ENCODE measurements at regions of chr12 and their contacts with region 1.

Region 1: GRCh38 chr12:45728630-45729232 is 775 bp upstream of the ARID2 start:
- DNase-seq: peak; percentile 81 to 96
- H3K4me3 ChIP-seq: peak overlapping the region; percentile 98
- H3K27ac ChIP-seq: peak overlapping the region; percentile 91
- H3K4me1 ChIP-seq: peaks cover 42% of the 10 kb centered on the region
- H3K27me3 ChIP-seq: no peaks in the 10 kb centered on the region
- CTCF ChIP-seq: peak; percentile 83

Region 2: DNA sequence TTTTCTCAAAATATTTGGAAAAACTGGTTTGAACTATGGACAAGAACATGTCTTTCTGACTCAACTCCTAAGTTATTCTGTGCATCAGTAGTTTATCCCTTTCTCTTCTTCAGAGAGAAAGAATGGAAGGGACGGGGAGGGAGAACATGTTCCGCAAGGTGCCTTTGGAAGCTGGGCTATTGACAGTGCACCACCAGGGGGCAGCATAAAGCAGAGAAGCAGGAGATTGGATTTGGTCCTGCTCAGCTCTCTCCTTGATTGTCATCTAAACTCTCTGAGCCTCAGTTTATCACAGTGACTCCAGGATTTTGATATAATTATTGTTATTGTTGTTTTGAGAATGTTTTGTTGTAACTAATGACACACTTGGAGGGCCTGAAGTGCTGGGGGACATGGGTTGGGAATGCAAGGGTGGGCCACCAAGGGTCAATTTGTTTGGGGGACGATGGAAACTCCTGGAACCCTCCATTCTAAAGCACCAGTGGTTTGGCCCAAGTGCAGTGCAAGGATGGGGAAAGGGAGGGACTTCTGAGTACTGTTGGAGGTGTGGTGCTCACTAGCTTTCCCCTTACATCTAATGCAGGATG is 558.2 kb before region 1 on chr12:
- CTCF ChIA-PET with region 1: no interaction called
- POLR2A ChIA-PET with region 1: no interaction called
- intact Hi-C with region 1: loop called (anchors 1 kb)
- DNase-seq: peak; percentile 36 to 69
- H3K4me3 ChIP-seq: no peak overlapping the region
- H3K27ac ChIP-seq: no peak overlapping the region
- H3K4me1 ChIP-seq: no peaks in the 10 kb centered on the region
- H3K27me3 ChIP-seq: no peaks in the 10 kb centered on the region
- CTCF ChIP-seq: peak; percentile 92

Region 3: GRCh38 chr12:45234139-45234846 is 494.4 kb before region 1 on chr12:
- CTCF ChIA-PET with region 1: interaction called, 3 read pairs
- POLR2A ChIA-PET with region 1: no interaction called
- intact Hi-C with region 1: loop called (anchors 5 kb)
- DNase-seq: peak; percentile 47 to 97
- H3K4me3 ChIP-seq: peak overlapping the region; percentile 44; the same call in 1 of the 2 replicates
- H3K27ac ChIP-seq: peak overlapping the region; percentile 100
- H3K4me1 ChIP-seq: peaks cover 62% of the 10 kb centered on the region
- H3K27me3 ChIP-seq: no peaks in the 10 kb centered on the region
- CTCF ChIP-seq: no peak

Region 4: GRCh38 chr12:45290204-45290580 is 438.5 kb before region 1 on chr12:
- CTCF ChIA-PET with region 1: no interaction called
- POLR2A ChIA-PET with region 1: interaction called, 10 read pairs
- intact Hi-C with region 1: no loop called
- DNase-seq: peak in 1 of 2 experiments; percentile 78
- H3K4me3 ChIP-seq: no peak overlapping the region
- H3K27ac ChIP-seq: no peak overlapping the region
- H3K4me1 ChIP-seq: peaks cover 28% of the 10 kb centered on the region
- H3K27me3 ChIP-seq: no peaks in the 10 kb centered on the region
- CTCF ChIP-seq: no peak

Region 5: GRCh38 chr12:45543906-45544315 is 184.8 kb before region 1 on chr12:
- CTCF ChIA-PET with region 1: interaction called, 7 read pairs
- POLR2A ChIA-PET with region 1: interaction called, 4 read pairs
- intact Hi-C with region 1: loop called (anchors 1 kb)
- DNase-seq: peak; percentile 42 to 55
- H3K4me3 ChIP-seq: no peak overlapping the region
- H3K27ac ChIP-seq: no peak overlapping the region
- H3K4me1 ChIP-seq: no peaks in the 10 kb centered on the region
- H3K27me3 ChIP-seq: no peaks in the 10 kb centered on the region
- CTCF ChIP-seq: peak; percentile 87